Posterior vena cava (tissue), 2 donors: ENCODE measurements at regions of chr5 and their contacts with region 1.

Region 1: GRCh38 chr5:142856269-142856782 is 86.1 kb downstream of the ARHGAP26 start:
- DNase-seq: no peak

Region 2: DNA sequence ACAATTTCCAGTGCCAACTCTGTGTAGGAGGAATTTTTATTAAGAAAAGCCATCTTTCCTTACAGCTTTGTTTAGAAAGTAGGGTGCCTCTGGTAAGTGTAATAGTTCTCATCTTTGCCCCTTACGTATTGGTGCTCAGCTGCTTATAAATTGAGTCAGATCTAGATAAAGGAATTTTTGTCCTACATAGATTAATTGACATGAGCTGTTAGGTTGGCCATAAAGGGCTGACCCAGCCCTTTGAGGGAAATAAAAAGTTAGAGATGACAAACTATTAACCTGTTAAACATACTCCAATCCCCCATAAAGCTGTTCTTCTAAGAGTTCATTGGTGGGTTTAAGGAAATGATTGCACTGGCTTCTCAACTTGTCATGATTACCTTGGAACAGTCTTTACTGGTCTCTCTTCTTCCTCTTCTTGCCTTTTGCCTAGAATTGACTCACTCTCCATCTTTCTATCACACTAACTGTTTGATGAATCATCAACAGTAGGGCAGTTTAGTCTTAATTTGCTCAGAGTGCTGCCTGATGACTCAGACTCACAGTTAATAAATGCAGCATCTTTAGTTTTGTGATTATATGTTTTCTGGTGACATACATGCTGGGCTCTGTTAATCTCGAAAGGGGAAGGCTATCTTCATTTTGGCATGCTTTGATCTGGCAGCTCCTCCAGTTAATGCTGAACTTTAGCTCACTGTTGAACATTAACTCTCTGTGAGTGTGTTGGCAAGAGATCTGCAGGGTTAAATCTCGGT is 34.4 kb before region 1 on chr5:
- intact Hi-C with region 1: loop called in 1 of 2 experiments (anchors 1 kb)
- DNase-seq: no peak

Region 3: DNA sequence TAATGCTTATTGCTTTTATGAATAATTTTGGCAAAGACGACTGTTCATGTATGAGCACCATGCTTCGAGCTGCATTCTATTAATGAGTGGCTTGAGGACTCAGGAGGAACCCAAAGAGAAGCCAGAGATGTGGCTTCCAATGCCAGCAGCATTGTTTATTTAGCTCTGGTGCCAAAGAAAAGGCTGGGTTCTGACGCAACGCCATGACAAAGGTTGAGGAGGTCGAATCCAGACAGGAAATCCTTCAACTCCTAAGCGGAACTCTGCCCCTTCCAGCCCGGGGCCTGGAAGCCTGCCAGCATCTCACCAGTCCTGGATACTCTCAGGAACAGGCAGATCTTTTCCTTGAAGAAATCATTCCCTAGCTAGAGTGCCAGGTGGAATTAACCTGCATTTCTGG is 18.2 kb after region 1 on chr5:
- intact Hi-C with region 1: no loop called
- DNase-seq: peak; percentile 94